Naive thymus-derived CD4-positive, alpha-beta T cell (primary cell): ENCODE measurements at regions of chr4 and their contacts with region 1.

Region 1: DNA sequence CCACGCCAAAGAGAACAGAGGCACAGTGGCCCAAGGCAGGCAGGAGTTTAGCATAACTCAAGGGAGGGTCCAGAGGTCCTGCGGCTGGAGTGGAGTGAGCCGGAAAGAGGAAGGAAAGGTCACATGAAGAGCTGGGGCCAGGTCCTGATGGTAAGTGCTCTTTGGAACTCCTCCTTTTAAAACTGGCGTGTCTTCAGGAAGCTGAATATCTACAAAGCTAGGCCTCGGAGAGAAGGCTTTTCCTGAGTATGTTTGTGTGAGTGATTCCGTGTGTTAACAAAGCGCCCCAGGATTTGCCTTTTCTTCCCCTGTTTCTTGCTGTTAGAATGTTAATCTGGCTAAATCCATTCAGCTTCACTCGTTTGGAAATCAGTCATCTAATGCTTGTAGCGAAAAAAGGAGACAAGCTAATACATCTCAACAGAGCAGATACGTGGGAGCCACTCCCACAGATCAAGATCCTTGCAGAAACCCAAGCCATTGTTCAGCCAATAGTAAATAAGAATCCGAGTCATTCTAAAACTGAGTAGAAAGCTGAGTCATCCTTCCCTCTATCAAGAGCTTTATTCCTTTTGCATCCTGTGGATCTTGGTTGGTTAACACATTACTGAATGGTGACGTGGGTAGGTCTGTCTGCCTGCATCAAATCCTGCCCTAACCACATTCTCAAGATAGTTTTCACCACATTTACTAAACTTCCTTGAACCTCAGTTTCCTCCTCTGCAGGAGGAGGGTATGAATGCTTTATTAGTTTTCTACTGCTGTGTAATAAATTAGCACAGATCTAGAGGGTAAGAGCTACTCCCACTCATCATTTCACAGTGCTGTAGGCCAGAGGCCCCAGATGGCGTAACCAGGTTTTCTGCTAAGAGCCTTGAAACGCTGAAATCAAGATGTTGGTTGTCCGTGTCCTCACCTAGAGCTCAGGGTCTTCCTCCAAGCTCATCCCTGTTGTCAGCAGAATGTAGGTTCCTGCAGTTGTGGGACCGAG is 43.2 kb upstream of the RBM47 start:
- DNase-seq: peak in 6 of 9 donors; percentile 4 to 49 (median 29)
- ATAC-seq: peak; percentile 88
- H3K4me3 ChIP-seq: no peak overlapping the region
- H3K4me3 Mint-ChIP-seq: peak overlapping the region in 3 of 10 donors; percentile 15 to 80 (median 31)
- H3K27ac ChIP-seq: no peak overlapping the region
- H3K27ac Mint-ChIP-seq: peak overlapping the region in 5 of 9 donors; percentile 42 to 94 (median 65)
- H3K4me1 ChIP-seq: peaks cover 4 to 16% of the 10 kb centered on the region in 2 donors
- H3K4me1 Mint-ChIP-seq: peaks cover 12 to 50% (median 14%) of the 10 kb centered on the region in 7 donors
- H3K27me3 ChIP-seq: no peaks in the 10 kb centered on the region
- H3K27me3 Mint-ChIP-seq: no peaks in the 10 kb centered on the region

Region 2: GRCh38 chr4:40621592-40622512 is 51.0 kb before region 1 on chr4:
- CTCF ChIA-PET with region 1: no interaction called
- POLR2A ChIA-PET with region 1: no interaction called
- intact Hi-C with region 1: loop called in 1 of 2 experiments (anchors 2 kb)
- DNase-seq: no peak
- ATAC-seq: peak; percentile 84
- H3K4me3 ChIP-seq: no peak overlapping the region
- H3K4me3 Mint-ChIP-seq: peak overlapping the region in 2 of 10 donors; percentile 10 to 40
- H3K27ac ChIP-seq: no peak overlapping the region
- H3K27ac Mint-ChIP-seq: peak overlapping the region in 1 of 9 donors; percentile 24
- H3K4me1 ChIP-seq: no peaks in the 10 kb centered on the region
- H3K4me1 Mint-ChIP-seq: peaks cover 0 to 38% (median 8%) of the 10 kb centered on the region in 7 donors
- H3K27me3 ChIP-seq: no peaks in the 10 kb centered on the region
- H3K27me3 Mint-ChIP-seq: peaks cover 0 to 11% (median 10%) of the 10 kb centered on the region in 5 donors

Region 3: DNA sequence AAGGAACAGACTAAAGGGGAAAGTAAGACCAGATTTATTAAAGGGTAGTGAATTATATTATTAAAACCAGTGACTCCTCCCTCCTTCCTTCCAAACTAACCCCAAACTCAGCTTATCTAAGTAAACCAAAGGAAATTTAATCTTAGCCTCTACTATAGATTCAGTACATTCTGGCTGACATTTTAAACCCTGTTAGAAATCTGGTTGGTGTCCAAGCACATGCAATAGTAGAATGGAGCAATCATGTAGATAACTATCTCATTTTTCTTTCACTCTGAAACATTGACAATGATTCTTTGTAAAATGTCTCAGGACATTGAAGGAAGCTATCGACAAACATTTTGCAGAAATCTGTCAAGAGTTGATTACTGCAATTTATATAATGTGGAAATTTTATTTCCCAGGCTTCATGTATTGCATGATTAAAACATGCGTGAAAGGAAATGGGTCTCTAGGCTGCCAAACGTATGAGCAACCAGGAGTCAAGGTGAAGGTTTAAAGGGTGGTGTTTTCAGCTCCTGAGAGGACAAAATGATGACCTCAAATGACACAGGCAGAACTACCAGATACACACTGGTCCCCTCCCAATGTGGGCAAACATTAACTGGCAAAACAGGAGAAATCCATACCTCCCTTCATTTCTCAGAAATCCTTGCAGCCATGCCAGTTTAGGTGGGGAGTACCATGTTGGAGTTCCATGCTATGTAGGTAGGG is 15.0 kb after region 1 on chr4:
- CTCF ChIA-PET with region 1: no interaction called
- POLR2A ChIA-PET with region 1: no interaction called
- intact Hi-C with region 1: loop called in 1 of 2 experiments (anchors 1 kb)
- DNase-seq: no peak
- ATAC-seq: no peak
- H3K4me3 ChIP-seq: no peak overlapping the region
- H3K4me3 Mint-ChIP-seq: peak overlapping the region in 1 of 10 donors; percentile 42
- H3K27ac ChIP-seq: no peak overlapping the region
- H3K27ac Mint-ChIP-seq: peak overlapping the region in 1 of 9 donors; percentile 79
- H3K4me1 ChIP-seq: no peaks in the 10 kb centered on the region
- H3K4me1 Mint-ChIP-seq: peaks cover 0 to 16% (median 0%) of the 10 kb centered on the region in 7 donors
- H3K27me3 ChIP-seq: no peaks in the 10 kb centered on the region
- H3K27me3 Mint-ChIP-seq: peaks cover 0 to 3% (median 0%) of the 10 kb centered on the region in 5 donors